ENCODE measurements at regions of chr7 and their contacts with region 1.

Region 1: GRCh38 chr7:70393956-70394355 is 738.0 kb upstream of the GALNT17 start:
- DNase-seq: no peak
- ATAC-seq: no peak
- H3K4me3 ChIP-seq: no peak overlapping the region
- H3K4me3 Mint-ChIP-seq: no peak overlapping the region
- H3K27ac ChIP-seq: no peak overlapping the region
- H3K27ac Mint-ChIP-seq: no peak overlapping the region
- H3K4me1 ChIP-seq: no peaks in the 10 kb centered on the region
- H3K4me1 Mint-ChIP-seq: no peaks in the 10 kb centered on the region
- H3K27me3 ChIP-seq: no peaks in the 10 kb centered on the region
- H3K27me3 Mint-ChIP-seq: no peaks in the 10 kb centered on the region

Region 2: GRCh38 chr7:70347880-70348279 is 46.1 kb before region 1 on chr7:
- CTCF ChIA-PET with region 1: interaction called in 1 of 2 experiments, 11 read pairs
- POLR2A ChIA-PET with region 1: no interaction called
- DNase-seq: no peak
- ATAC-seq: no peak
- H3K4me3 ChIP-seq: no peak overlapping the region
- H3K4me3 Mint-ChIP-seq: no peak overlapping the region
- H3K27ac ChIP-seq: no peak overlapping the region
- H3K27ac Mint-ChIP-seq: no peak overlapping the region
- H3K4me1 ChIP-seq: peaks cover 8 to 16% of the 10 kb centered on the region in 2 experiments
- H3K4me1 Mint-ChIP-seq: peaks cover 12 to 15% (median 12%) of the 10 kb centered on the region in 3 donors
- H3K27me3 ChIP-seq: no peaks in the 10 kb centered on the region
- H3K27me3 Mint-ChIP-seq: no peaks in the 10 kb centered on the region

Region 3: GRCh38 chr7:70489813-70490212 is 95.9 kb after region 1 on chr7:
- CTCF ChIA-PET with region 1: no interaction called
- POLR2A ChIA-PET with region 1: no interaction called
- DNase-seq: no peak
- ATAC-seq: no peak
- H3K4me3 ChIP-seq: no peak overlapping the region
- H3K4me3 Mint-ChIP-seq: no peak overlapping the region
- H3K27ac ChIP-seq: no peak overlapping the region
- H3K27ac Mint-ChIP-seq: no peak overlapping the region
- H3K4me1 ChIP-seq: no peaks in the 10 kb centered on the region
- H3K4me1 Mint-ChIP-seq: no peaks in the 10 kb centered on the region
- H3K27me3 ChIP-seq: peaks cover 0 to 7% of the 10 kb centered on the region in 2 experiments
- H3K27me3 Mint-ChIP-seq: no peaks in the 10 kb centered on the region

Measured in T-cell (primary cell).